CD8-positive, alpha-beta memory T cell (primary cell): ENCODE measurements at regions of chr1 and their contacts with region 1.

Region 1: DNA sequence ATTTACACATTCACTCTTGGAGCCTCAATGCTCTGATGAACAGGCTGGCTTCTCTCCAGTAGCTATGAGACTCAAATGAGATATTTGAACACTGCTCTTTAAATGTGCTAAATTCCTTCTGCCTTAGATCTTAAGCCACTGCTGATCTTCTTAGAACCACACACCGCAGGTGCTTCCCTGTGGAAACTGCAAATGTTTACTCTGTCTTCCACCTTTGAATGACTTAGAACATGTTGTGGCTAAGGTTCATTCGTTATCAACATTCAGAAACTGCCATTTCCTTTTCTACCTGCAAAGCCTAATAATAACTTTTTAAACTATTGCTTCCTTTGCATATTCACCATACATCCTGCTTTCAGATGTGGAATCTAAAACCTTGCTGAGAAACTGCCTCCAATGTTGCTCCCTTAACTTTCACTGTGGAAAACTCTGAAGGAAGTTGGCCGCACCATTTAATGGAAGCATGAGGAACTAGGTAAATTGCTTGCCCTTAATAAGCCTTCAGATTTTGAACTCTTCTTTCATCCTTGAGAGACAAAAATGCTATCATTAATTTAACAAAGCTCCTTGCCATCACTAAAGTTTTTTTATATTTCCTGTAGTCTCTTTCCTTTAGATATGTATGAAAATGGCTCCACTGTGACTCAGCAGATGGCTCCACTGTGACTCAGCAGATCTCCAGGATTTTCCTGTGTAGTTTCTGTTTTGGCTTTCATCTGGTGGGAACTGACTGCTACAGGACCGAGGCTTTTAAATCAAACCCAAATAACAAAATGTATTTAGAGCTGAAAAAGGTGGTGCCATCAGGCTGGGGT is 143.8 kb downstream of the TNFSF18 start:
- DNase-seq: peak in 4 of 5 donors; percentile 6 to 57 (median 22)
- H3K4me3 ChIP-seq: no peak overlapping the region
- H3K4me3 Mint-ChIP-seq: peak overlapping the region in 5 of 7 donors; percentile 6 to 55 (median 15)
- H3K27ac ChIP-seq: no peak overlapping the region
- H3K27ac Mint-ChIP-seq: peak overlapping the region in 6 of 8 donors; percentile 22 to 73 (median 38)
- H3K4me1 ChIP-seq: peaks cover 20% of the 10 kb centered on the region
- H3K4me1 Mint-ChIP-seq: peaks cover 15 to 27% (median 26%) of the 10 kb centered on the region in 3 donors
- H3K27me3 ChIP-seq: no peaks in the 10 kb centered on the region
- H3K27me3 Mint-ChIP-seq: no peaks in the 10 kb centered on the region

Region 2: DNA sequence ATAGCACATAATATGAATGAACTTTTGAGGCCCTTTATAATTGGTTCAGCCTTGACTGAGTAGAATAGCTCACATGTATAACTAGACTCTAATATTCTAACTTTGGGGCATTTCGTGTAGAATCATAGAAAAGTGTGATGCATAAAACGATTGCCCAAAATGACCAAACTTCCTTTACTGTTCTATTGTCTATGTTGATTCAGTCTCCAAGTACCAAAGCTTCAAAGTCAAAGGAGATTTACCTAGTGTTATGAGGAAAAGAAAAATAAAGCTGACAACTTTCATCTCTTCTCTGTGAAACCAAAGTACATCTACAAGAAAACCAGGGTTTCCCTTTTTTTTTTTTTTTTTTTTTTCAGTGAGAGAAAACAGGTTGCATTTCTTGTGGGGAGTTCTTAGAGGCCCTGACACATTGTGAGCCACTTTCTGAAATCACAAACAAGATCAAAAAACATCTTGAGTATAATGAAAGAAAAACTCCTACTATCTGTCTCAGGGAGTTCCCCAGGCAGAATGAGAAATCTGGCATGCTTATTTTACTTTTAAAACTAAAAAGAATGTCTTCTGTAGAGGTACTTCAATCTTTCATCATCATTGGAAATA is 39.7 kb before region 1 on chr1:
- CTCF ChIA-PET with region 1: no interaction called
- POLR2A ChIA-PET with region 1: no interaction called
- DNase-seq: peak in 2 of 5 donors; percentile 28 to 39
- H3K4me3 ChIP-seq: no peak overlapping the region
- H3K4me3 Mint-ChIP-seq: no peak overlapping the region
- H3K27ac ChIP-seq: no peak overlapping the region
- H3K27ac Mint-ChIP-seq: peak overlapping the region in 2 of 8 donors; percentile 0 to 28
- H3K4me1 ChIP-seq: peaks cover 5% of the 10 kb centered on the region
- H3K4me1 Mint-ChIP-seq: peaks cover 12 to 31% (median 27%) of the 10 kb centered on the region in 3 donors
- H3K27me3 ChIP-seq: no peaks in the 10 kb centered on the region
- H3K27me3 Mint-ChIP-seq: no peaks in the 10 kb centered on the region

Region 3: GRCh38 chr1:172895050-172895460 is 11.9 kb before region 1 on chr1:
- CTCF ChIA-PET with region 1: interaction called, 3 read pairs
- POLR2A ChIA-PET with region 1: interaction called, 10 read pairs
- DNase-seq: peak in 2 of 5 donors; percentile 21 to 28
- H3K4me3 ChIP-seq: peak overlapping the region; percentile 4
- H3K4me3 Mint-ChIP-seq: peak overlapping the region; percentile 57 to 86 (median 76)
- H3K27ac ChIP-seq: no peak overlapping the region
- H3K27ac Mint-ChIP-seq: peak overlapping the region; percentile 52 to 97 (median 85)
- H3K4me1 ChIP-seq: peaks cover 18% of the 10 kb centered on the region
- H3K4me1 Mint-ChIP-seq: peaks cover 26 to 52% (median 52%) of the 10 kb centered on the region in 3 donors
- H3K27me3 ChIP-seq: no peaks in the 10 kb centered on the region
- H3K27me3 Mint-ChIP-seq: no peaks in the 10 kb centered on the region